Vagina (tissue), 2 donors: ENCODE measurements at regions of chr2 and their contacts with region 1.

Region 1: GRCh38 chr2:21083482-21083881 is 39.6 kb upstream of the APOB start:
- DNase-seq: no peak
- H3K4me3 ChIP-seq: no peak overlapping the region
- H3K27ac ChIP-seq: no peak overlapping the region
- H3K4me1 ChIP-seq: no peaks in the 10 kb centered on the region
- H3K27me3 ChIP-seq: no peaks in the 10 kb centered on the region
- CTCF ChIP-seq: no peak
- POLR2A ChIP-seq: no peak

Region 2: DNA sequence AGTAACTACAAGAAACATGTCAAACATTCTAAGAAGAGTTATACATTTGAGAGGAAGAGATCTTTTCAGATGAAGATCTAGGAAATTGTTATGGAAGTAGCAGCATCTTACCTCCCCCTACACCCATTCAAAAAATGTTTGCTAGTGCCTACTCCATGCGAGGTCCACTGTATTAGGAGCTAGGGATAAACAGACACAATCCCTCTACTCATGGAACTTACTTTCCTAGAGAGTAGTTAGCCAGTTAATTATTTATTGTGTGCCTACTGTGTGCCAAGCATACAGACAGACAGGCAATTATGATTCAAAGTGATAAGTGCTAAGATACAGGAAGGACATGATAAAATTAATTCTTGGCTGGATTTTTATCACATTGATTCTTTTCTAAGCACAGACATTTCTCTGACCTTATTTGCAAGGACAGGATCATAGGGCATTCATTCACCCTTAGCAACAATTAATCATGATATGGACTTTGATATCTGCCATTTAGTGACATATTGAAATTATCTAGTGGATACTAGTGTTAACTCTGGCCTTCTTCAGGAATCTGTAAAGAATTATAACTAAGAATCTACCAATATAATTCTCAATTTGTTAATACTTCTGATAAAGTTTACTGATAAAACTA is 20.7 kb after region 1 on chr2:
- intact Hi-C with region 1: loop called (anchors 1 kb)
- DNase-seq: no peak
- H3K4me3 ChIP-seq: no peak overlapping the region
- H3K27ac ChIP-seq: no peak overlapping the region
- H3K4me1 ChIP-seq: no peaks in the 10 kb centered on the region
- H3K27me3 ChIP-seq: no peaks in the 10 kb centered on the region
- CTCF ChIP-seq: no peak
- POLR2A ChIP-seq: no peak

Region 3: GRCh38 chr2:21131861-21132260 is 48.4 kb after region 1 on chr2:
- intact Hi-C with region 1: no loop called
- DNase-seq: no peak
- H3K4me3 ChIP-seq: no peak overlapping the region
- H3K27ac ChIP-seq: no peak overlapping the region
- H3K4me1 ChIP-seq: no peaks in the 10 kb centered on the region
- H3K27me3 ChIP-seq: no peaks in the 10 kb centered on the region
- CTCF ChIP-seq: no peak
- POLR2A ChIP-seq: no peak